Posterior cingulate gyrus (tissue), 11 donors: ENCODE measurements at regions of chr14 and their contacts with region 1.

Region 1: DNA sequence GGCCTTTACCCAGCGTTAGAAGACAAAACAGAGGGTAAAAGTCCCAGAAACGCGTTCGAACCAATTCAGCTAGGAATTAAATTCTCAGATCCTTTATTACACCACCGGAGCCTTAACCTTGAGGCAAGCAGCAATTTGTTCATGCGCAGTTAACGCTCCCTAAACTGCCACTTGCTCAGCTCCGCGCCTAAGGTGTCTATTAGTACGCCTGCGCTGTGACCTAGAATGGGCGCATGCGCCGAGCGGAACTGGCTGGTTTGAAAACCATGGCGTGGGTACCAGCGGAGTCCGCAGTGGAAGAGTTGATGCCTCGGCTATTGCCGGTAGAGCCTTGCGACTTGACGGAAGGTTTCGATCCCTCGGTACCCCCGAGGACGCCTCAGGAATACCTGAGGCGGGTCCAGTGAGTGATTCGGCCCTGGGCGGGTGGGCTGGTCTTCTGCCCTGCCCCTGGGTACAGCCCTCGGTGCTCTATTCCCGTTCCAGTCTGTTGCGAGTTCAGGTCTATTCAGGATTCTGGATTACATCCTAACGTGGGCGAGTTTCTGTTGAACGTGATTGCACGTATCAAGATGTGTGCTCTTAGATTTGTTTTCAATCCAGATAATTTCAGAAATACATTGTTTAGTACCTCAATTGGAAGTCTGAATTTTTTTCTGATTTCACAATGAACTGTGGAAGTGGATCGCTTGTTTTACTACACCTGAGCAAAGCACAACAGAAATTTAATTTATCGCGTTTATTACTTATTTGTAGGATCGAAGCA is at the start of gene GEMIN2:
- DNase-seq: peak; percentile 89 to 99 (median 92)

Region 2: DNA sequence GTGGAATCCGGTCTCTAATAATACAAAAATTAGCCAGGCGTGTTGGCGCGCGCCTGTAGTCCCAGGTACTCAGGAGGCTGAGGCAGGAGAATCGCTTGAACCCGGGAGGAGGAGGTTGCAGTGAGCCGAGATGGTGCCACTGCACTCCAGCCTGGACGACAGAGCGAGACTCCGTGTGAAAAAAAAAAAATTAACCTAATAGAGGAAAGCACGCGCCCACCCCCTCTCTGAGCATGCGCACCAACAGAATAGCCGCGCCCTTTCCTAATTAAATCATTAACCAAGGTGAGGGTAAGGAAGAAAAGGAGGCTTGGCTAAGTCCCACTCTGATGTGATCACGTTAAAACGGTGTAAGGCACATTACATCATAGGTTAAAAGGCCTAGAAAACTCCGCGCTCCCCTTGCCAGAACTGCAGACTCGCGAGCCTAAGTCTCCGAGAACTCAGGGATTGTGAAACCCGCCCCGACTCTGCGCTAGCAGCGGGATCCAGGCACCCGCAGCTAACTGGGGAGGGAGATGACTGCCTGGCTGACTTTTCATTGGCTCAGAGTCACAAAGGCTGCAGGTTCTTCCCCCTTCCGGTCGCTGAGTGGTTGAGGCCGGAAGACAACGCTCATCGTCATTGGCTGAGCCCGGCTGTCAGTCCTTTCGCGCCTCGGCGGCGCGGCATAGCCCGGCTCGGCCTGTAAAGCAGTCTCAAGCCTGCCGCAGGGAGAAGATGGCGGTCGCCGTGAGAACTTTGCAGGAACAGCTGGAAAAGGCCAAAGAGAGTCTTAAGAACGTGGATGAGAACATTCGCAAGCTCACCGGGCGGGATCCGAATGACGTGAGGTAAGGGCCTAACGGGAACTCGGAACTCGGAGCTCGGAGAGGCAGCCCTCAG is 60.5 kb after region 1 on chr14 and contains the start of gene PNN:
- intact Hi-C with region 1: loop called (anchors 2 kb)
- DNase-seq: peak; percentile 96 to 100 (median 98)

Region 3: GRCh38 chr14:39219075-39219499 is 104.8 kb after region 1 on chr14:
- intact Hi-C with region 1: no loop called
- DNase-seq: no peak

Region 4: DNA sequence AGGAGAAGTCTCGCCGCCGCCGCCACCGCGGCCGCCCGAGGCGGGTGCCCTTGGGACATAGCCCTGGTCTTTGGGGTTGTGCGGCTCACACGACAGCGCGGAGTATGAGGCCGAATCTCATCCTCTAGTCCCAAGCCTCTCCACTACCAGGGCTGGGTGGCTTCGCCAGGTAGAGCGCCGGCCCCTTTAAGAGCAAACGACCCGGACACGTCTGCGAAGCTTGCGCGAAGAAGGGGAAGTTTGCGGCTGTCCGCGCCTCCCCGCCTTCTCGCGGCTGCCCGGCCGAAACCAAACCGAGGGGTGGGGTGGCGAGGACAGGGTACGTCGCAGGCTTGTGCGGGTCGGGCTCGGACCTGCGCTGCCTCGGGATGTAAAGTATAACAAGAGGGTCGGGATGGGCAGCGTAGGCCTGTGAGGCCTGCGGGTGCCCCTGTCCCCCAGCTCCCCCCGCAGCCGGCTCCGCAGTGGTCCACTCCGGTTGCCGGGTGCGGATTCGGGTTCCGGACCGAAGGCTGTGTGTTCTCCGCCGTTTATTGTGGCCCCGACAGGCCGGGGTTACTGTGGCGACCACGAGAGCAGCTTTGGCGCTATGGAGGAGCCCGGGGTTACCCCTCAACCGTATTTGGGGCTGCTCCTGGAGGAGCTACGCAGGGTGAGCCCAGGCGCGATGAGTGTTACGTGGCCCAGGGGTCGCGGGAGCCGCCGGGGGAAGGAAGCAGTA is 152.8 kb after region 1 on chr14:
- intact Hi-C with region 1: loop called (anchors 5 kb)
- DNase-seq: peak; percentile 65 to 95 (median 80)

Region 5: GRCh38 chr14:40362856-40363255 is 1248.6 kb after region 1 on chr14:
- intact Hi-C with region 1: no loop called
- DNase-seq: no peak

Region 6: DNA sequence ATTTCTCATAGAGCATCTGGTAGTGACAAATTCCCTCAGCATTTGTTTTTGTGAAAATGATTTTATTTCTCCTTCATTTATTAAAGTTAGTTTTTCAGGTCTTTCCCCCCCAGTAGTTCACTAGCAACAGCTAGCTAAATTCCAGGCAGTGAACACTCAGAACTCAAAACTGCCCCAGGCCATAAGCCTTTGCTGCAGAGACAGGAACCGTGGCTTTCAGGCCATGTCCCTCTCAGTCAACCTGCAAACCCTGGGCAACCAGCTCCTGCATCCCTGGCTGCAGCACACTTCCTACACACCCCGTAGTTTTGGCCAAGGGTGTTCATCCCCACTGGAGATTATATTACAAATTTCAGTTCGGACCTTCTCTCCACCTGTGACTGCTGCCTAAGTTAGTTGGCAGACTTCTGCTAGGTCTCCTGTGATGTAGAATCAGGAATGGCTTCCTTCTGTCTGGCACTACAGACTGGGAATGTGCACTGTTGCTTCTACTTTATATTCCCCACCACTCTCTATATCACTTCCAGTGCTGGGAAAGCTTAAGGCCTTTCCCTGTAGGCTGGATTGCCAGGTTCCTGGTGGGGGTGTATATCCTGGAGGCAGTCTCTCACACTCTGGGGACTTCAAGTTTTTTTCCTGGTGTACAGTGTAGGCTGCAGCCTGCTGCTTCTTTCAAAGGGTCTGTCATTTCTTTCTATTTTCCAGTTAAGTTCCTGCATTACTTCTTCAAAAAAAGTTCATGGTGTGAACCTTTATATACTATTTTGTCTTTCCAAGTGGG is 1568.1 kb after region 1 on chr14:
- intact Hi-C with region 1: no loop called
- DNase-seq: no peak